Activated CD8-positive, alpha-beta T cell treated with anti-CD3 and anti-CD28 coated beads for 36 hours (primary cell): ENCODE measurements at regions of chr7 and their contacts with region 1.

Region 1: GRCh38 chr7:80392229-80393169 is 119.4 kb downstream of the GNAT3 start:
- DNase-seq: no peak
- ATAC-seq: no peak
- H3K4me3 Mint-ChIP-seq: no peak overlapping the region
- H3K27ac Mint-ChIP-seq: no peak overlapping the region
- H3K4me1 Mint-ChIP-seq: no peaks in the 10 kb centered on the region
- H3K27me3 Mint-ChIP-seq: peaks cover 2% of the 10 kb centered on the region
- CTCF ChIP-seq: no peak

Region 2: DNA sequence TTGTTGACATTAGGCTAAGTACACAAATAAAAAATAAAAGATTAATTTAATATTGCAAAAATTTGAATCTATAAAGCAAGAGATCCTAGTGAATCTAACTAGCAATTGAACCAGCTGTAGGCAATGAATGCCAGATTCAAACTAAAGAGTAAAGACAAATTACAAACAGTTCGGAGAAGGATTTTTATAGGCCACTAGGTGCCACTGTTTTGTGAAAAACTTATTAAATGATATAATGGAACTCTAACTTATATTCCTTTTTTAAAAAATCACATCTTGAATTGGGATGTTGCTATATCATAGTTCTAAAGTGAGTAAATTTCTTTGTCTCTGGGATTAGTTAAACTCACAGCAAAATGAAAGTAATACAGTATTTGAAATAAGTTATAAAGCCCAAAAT is 297.0 kb before region 1 on chr7:
- CTCF ChIA-PET with region 1: interaction called, 6 read pairs
- POLR2A ChIA-PET with region 1: no interaction called
- intact Hi-C with region 1: loop called (anchors 10 kb)
- DNase-seq: no peak
- ATAC-seq: no peak
- H3K4me3 Mint-ChIP-seq: no peak overlapping the region
- H3K27ac Mint-ChIP-seq: no peak overlapping the region
- H3K4me1 Mint-ChIP-seq: no peaks in the 10 kb centered on the region
- H3K27me3 Mint-ChIP-seq: no peaks in the 10 kb centered on the region
- CTCF ChIP-seq: peak; percentile 42

Region 3: DNA sequence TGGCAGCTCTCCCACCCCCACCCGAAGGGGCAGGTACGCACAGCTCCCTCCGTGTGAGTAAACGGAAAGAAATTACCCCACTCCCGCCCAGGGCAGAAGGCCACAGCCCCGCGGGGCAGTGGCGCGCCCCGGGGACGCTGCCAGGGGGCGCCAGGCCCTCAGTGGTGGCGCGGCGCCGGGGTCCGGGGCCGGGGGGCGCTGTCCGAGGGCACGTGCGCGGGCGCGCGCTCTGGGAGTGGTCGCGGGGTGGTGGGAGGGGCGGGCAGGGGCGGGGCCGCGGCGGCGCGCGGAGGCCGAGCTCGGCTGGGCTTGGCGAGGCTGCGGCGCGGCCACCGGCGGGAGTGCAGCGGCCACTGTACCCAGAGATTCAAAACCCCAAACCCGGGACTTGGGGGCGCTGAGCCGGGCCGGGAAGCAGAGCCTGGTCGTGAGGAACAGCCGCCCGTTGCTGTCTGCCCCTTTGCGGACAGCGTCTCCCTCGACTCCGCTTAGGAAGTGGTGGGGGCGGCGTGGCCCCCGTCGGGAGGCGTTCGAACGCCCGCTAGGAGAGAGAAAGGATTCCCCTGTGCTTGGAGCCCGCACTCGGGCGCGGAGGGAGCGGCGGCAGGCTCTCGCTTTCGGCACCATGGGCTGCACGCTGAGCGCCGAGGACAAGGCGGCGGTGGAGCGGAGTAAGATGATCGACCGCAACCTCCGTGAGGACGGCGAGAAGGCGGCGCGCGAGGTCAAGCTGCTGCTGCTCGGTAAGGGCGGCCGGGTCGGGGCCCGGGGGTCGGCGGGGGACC is 257.8 kb before region 1 on chr7 and contains the start of gene GNAI1:
- CTCF ChIA-PET with region 1: interaction called, 4 read pairs
- POLR2A ChIA-PET with region 1: no interaction called
- intact Hi-C with region 1: loop called (anchors 10 kb)
- DNase-seq: peak; percentile 50
- ATAC-seq: peak; percentile 52
- H3K4me3 Mint-ChIP-seq: peak within 1 kb of the TSS; percentile 72
- H3K27ac Mint-ChIP-seq: peak within 1 kb of the TSS; percentile 58
- H3K4me1 Mint-ChIP-seq: peaks cover 30% of the 10 kb centered on the region
- H3K27me3 Mint-ChIP-seq: peaks cover 37% of the 10 kb centered on the region
- CTCF ChIP-seq: no peak
- total RNA-seq, gene GNAI1: 1.7 to 2.8 TPM

Region 4: DNA sequence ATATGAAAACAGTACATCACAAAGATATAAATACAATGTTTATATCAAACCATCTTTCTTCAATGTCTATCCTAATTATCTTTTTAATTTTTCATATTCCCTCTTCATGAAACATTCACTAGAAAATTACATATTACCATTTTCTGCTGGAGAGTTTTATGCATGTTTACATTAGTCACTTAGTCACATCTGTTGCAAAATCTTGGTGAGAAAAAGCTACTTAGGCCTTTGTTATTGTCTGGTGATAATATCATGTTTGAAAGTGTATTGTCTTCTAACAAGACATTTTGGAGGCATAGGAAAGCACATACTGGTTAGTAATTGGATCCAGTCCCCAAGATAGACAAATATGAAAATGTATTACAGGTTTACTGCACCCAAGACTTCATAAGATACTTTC is 94.3 kb before region 1 on chr7:
- CTCF ChIA-PET with region 1: no interaction called
- POLR2A ChIA-PET with region 1: no interaction called
- intact Hi-C with region 1: no loop called
- DNase-seq: no peak
- ATAC-seq: no peak
- H3K4me3 Mint-ChIP-seq: no peak overlapping the region
- H3K27ac Mint-ChIP-seq: no peak overlapping the region
- H3K4me1 Mint-ChIP-seq: no peaks in the 10 kb centered on the region
- H3K27me3 Mint-ChIP-seq: peaks cover 2% of the 10 kb centered on the region
- CTCF ChIP-seq: no peak